ENCODE measurements at regions of chr1 and their contacts with region 1.

Region 1: DNA sequence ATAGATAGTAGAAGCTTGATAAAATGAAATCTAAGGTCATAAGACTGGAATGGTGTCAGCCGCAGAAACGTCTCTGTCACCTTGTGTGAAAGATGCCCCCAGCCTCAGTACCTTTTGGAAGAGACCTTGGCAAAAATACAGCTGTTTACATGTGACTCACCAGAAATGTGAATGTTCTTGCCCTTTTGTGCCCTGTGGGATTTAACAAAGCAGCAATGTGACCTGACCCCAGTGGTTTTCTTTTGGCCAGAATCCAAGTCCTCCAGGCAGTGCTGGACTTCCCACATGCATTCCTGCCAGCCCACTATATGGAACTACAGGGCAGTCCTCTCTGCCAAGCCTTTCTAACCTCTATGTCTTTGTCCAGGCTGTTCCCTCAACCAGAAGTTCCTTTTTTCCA is 27.2 kb upstream of the LRRC8C start:
- DNase-seq: no peak
- ATAC-seq: peak; percentile 17; the same call in 1 of the 2 replicates
- H3K4me3 ChIP-seq: no peak overlapping the region
- H3K27ac ChIP-seq: no peak overlapping the region
- H3K4me1 ChIP-seq: no peaks in the 10 kb centered on the region
- H3K27me3 ChIP-seq: no peaks in the 10 kb centered on the region
- CTCF ChIP-seq: no peak

Region 2: GRCh38 chr1:89310505-89310904 is 295.2 kb before region 1 on chr1:
- CTCF ChIA-PET with region 1: no interaction called
- POLR2A ChIA-PET with region 1: no interaction called
- in situ Hi-C with region 1: no loop called
- intact Hi-C with region 1: no loop called
- DNase-seq: no peak
- ATAC-seq: no peak
- H3K4me3 ChIP-seq: no peak overlapping the region
- H3K27ac ChIP-seq: no peak overlapping the region
- H3K4me1 ChIP-seq: no peaks in the 10 kb centered on the region
- H3K27me3 ChIP-seq: no peaks in the 10 kb centered on the region
- CTCF ChIP-seq: no peak

Region 3: GRCh38 chr1:89843281-89844121 is 237.8 kb after region 1 on chr1:
- CTCF ChIA-PET with region 1: interaction called, 11 read pairs
- POLR2A ChIA-PET with region 1: no interaction called
- in situ Hi-C with region 1: no loop called
- intact Hi-C with region 1: no loop called
- DNase-seq: no peak
- ATAC-seq: peak; percentile 98
- H3K4me3 ChIP-seq: peak overlapping the region; percentile 65 to 79
- H3K27ac ChIP-seq: peak overlapping the region; percentile 85
- H3K4me1 ChIP-seq: peaks cover 18% of the 10 kb centered on the region
- H3K27me3 ChIP-seq: no peaks in the 10 kb centered on the region
- CTCF ChIP-seq: peak; percentile 95